CD14-positive monocyte (primary cell): ENCODE measurements at regions of chr13 and their contacts with region 1.

Region 1: DNA sequence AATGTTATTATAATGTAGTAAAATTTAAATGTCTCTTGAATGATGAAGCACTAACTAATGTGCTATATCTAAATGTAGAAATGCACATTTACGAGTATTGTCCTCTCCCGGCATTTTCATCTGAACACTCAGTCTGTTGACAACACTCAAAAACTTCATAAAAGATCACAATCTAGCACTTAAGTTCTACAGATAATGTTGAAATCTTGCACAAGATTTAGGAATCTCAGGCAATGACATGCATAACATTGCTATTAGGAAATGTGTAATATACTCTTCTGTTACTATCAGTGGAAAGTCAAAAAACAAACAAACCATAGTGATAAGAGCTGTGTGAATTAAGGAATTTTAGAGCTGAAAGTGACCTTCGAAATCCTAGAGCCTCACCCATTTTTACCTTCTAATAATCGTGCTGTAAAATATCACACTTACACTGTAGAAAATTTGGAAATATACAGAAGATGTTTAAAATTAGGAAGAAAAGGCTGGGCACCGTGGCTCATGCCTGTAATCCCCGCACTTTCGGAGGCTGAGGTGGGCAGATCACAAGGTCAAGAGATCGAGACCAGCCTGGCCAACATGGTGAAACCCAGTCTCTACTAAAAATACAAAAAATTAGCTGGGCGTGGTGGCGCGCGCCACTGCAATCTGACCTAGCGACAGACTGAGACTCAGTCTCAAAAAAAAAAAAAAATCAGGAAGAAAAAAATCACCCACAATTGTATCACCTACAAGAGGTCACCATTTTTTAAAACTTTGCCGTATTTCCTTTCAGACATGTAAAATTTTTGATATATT is 37.7 kb upstream of the XPO4 start:
- DNase-seq: no peak
- H3K4me3 ChIP-seq: no peak overlapping the region
- H3K4me3 Mint-ChIP-seq: no peak overlapping the region
- H3K27ac ChIP-seq: no peak overlapping the region
- H3K27ac Mint-ChIP-seq: no peak overlapping the region
- H3K4me1 ChIP-seq: peaks cover 12 to 13% of the 10 kb centered on the region in 2 donors
- H3K4me1 Mint-ChIP-seq: peaks cover 13% of the 10 kb centered on the region
- H3K27me3 ChIP-seq: no peaks in the 10 kb centered on the region
- H3K27me3 Mint-ChIP-seq: peaks cover 0 to 7% (median 5%) of the 10 kb centered on the region in 3 donors
- CTCF ChIP-seq: no peak

Region 2: GRCh38 chr13:20980430-20980829 is 40.1 kb after region 1 on chr13:
- intact Hi-C with region 1: no loop called
- DNase-seq: no peak
- H3K4me3 ChIP-seq: no peak overlapping the region
- H3K4me3 Mint-ChIP-seq: no peak overlapping the region
- H3K27ac ChIP-seq: peak overlapping the region in 1 of 2 donors; percentile 39
- H3K27ac Mint-ChIP-seq: peak overlapping the region in 5 of 7 donors; percentile 13 to 67 (median 30)
- H3K4me1 ChIP-seq: no peaks in the 10 kb centered on the region
- H3K4me1 Mint-ChIP-seq: no peaks in the 10 kb centered on the region
- H3K27me3 ChIP-seq: no peaks in the 10 kb centered on the region
- H3K27me3 Mint-ChIP-seq: peaks cover 0 to 4% (median 0%) of the 10 kb centered on the region in 3 donors
- CTCF ChIP-seq: no peak

Region 3: GRCh38 chr13:21014502-21015170 is 74.4 kb after region 1 on chr13:
- intact Hi-C with region 1: loop called in 1 of 2 experiments (anchors 2 kb)
- DNase-seq: no peak
- H3K4me3 ChIP-seq: no peak overlapping the region
- H3K4me3 Mint-ChIP-seq: no peak overlapping the region
- H3K27ac ChIP-seq: peak overlapping the region in 1 of 2 donors; percentile 27
- H3K27ac Mint-ChIP-seq: peak overlapping the region in 6 of 7 donors; percentile 1 to 81 (median 69)
- H3K4me1 ChIP-seq: peaks cover 32 to 35% of the 10 kb centered on the region in 2 donors
- H3K4me1 Mint-ChIP-seq: peaks cover 49% of the 10 kb centered on the region
- H3K27me3 ChIP-seq: no peaks in the 10 kb centered on the region
- H3K27me3 Mint-ChIP-seq: no peaks in the 10 kb centered on the region
- CTCF ChIP-seq: no peak

Region 4: DNA sequence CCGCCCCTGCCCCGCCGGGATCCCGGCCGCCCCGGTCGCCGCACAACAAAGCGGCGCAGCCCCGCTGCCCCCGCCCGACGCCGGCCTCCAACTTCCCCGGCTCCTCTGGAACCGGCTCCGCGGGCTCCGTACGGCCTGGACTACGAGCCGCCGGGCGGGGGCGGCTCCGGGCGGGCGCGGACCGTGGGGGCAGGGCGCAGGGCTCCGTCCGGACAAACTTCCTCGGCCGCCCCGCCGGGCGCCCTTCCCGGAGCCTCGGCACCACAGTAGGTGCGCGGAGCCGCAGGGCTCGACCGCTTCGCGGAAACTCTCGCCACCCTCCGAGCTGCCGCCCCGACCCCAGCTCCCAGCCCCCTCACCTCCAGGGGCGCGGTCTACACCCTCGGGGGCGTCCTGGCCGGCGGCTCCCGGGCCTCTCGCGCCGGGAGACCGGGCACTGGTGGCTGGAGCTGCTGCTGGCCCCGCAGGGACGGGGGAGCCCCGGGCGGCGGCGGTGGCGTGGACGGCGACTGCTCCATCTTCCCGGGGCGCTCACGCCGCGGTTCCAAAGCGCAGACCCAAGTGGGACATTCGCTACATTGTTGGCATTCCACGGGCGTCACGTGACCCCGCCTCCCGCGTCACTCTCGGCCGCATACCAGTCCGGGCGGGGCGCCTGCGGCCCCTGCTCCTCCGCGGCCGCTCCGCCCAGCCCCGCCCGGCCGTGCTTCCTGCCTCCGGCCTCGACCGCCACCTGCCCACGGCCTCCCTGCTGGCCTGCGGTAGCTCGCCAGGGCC is 120.9 kb after region 1 on chr13 and contains the start of gene LATS2:
- intact Hi-C with region 1: loop called in 1 of 2 experiments (anchors 5 kb)
- DNase-seq: peak; percentile 89 to 95 (median 91)
- H3K4me3 ChIP-seq: peak within 1 kb of the TSS; percentile 58 to 95 (median 93)
- H3K4me3 Mint-ChIP-seq: peak within 1 kb of the TSS; percentile 84 to 90
- H3K27ac ChIP-seq: peak within 1 kb of the TSS; percentile 52 to 93
- H3K27ac Mint-ChIP-seq: peak within 1 kb of the TSS; percentile 85 to 94 (median 90)
- H3K4me1 ChIP-seq: peaks cover 41 to 53% of the 10 kb centered on the region in 2 donors
- H3K4me1 Mint-ChIP-seq: peaks cover 56% of the 10 kb centered on the region
- H3K27me3 ChIP-seq: no peaks in the 10 kb centered on the region
- H3K27me3 Mint-ChIP-seq: peaks cover 0 to 6% (median 0%) of the 10 kb centered on the region in 3 donors
- CTCF ChIP-seq: no peak
- polyA plus RNA-seq, gene LATS2: 0.96 to 11.2 (median 1.0) TPM